T-cell (primary cell): ENCODE measurements at regions of chr17 and their contacts with region 1.

Region 1: GRCh38 chr17:28644985-28645939 is at the start of gene BLTP2:
- DNase-seq: peak; percentile 91 to 98 (median 95)
- ATAC-seq: peak; percentile 97 to 100 (median 99)
- H3K4me3 ChIP-seq: peak within 1 kb of the TSS; percentile 83 to 91
- H3K4me3 Mint-ChIP-seq: peak within 1 kb of the TSS; percentile 85 to 94 (median 92)
- H3K27ac ChIP-seq: peak within 1 kb of the TSS; percentile 75
- H3K27ac Mint-ChIP-seq: peak within 1 kb of the TSS; percentile 88 to 91
- H3K4me1 ChIP-seq: peaks cover 27 to 33% of the 10 kb centered on the region in 2 experiments
- H3K4me1 Mint-ChIP-seq: peaks cover 39 to 45% (median 41%) of the 10 kb centered on the region in 3 donors
- H3K27me3 ChIP-seq: no peaks in the 10 kb centered on the region
- H3K27me3 Mint-ChIP-seq: no peaks in the 10 kb centered on the region
- total RNA-seq, gene BLTP2: 129 to 156 (median 138) TPM

Region 2: GRCh38 chr17:28661635-28662537 is 16.6 kb after region 1 on chr17 and contains the starts of genes SDF2 and SUPT6H:
- CTCF ChIA-PET with region 1: interaction called, 5 to 63 read pairs
- POLR2A ChIA-PET with region 1: interaction called, 4 to 15 read pairs
- DNase-seq: peak; percentile 88 to 98 (median 94)
- ATAC-seq: peak; percentile 88 to 89 (median 88)
- H3K4me3 ChIP-seq: peak within 1 kb of the TSS; percentile 80 to 88
- H3K4me3 Mint-ChIP-seq: peak within 1 kb of the TSS; percentile 93 to 100 (median 98)
- H3K27ac ChIP-seq: peak within 1 kb of the TSS; percentile 95
- H3K27ac Mint-ChIP-seq: peak within 1 kb of the TSS; percentile 100
- H3K4me1 ChIP-seq: peaks cover 30 to 43% of the 10 kb centered on the region in 2 experiments
- H3K4me1 Mint-ChIP-seq: peaks cover 62 to 67% (median 63%) of the 10 kb centered on the region in 3 donors
- H3K27me3 ChIP-seq: no peaks in the 10 kb centered on the region
- H3K27me3 Mint-ChIP-seq: no peaks in the 10 kb centered on the region
- total RNA-seq, gene SDF2: 25.3 to 45.8 (median 43.9) TPM
- total RNA-seq, gene SUPT6H: 89.2 to 129 (median 95.7) TPM